Posterior vena cava (tissue), 2 donors: ENCODE measurements at regions of chr13 and their contacts with region 1.

Region 1: GRCh38 chr13:20902438-20903163 is at the start of gene XPO4:
- DNase-seq: peak; percentile 93
- total RNA-seq, gene XPO4: 11.8 to 12.8 TPM

Region 2: GRCh38 chr13:20425819-20426219 is 476.8 kb before region 1 on chr13:
- intact Hi-C with region 1: loop called in 1 of 2 experiments (anchors 10 kb)
- DNase-seq: no peak

Region 3: DNA sequence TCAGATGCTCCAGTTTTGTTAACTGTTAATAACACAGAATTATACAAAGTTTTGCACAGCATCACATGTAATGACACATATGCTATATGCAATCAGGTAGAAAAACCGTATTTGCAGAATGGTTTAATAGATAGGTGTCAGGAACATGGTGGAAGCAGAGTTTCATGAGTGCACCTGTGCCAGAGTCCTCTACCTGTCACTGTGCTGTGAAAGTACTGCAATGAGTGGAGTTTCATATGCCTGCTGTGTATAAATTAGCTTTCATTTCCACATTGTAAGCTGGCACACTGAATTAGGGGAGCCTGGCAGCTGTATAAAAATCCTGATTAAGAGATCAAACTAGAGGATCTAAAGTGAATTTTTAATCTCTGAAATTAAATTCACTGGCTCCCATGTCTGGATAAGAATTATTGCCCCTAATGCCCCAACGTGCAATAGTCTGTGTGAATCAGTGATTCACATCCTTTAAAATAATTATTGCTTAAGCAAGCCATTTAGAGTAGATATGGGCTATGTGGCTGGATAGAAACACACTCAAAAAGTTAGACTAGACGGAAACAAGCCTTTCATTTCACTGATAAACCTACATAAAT is 120.4 kb before region 1 on chr13:
- intact Hi-C with region 1: no loop called
- DNase-seq: no peak